ENCODE measurements at regions of chr10 and their contacts with region 1.

Region 1: GRCh38 chr10:26725837-26726727 is 28.6 kb downstream of the PDSS1 start:
- DNase-seq: peak; percentile 18 to 63
- ATAC-seq: peak; percentile 89; a peak in 5 of 6 replicates
- H3K4me3 ChIP-seq: no peak overlapping the region
- H3K27ac ChIP-seq: no peak overlapping the region
- H3K4me1 ChIP-seq: 0 out of 3 replicates have a peak, but pooled peaks cover 5% of the 10 kb centered on the region
- CTCF ChIP-seq: peak; percentile 93
- EP300 ChIP-seq: no peak
- POLR2A ChIP-seq: no peak
- RAD21 ChIP-seq: peak; percentile 86 to 88

Region 2: GRCh38 chr10:26528715-26529393 is 197.2 kb before region 1 on chr10:
- CTCF ChIA-PET with region 1: no interaction called
- POLR2A ChIA-PET with region 1: no interaction called
- DNase-seq: no peak
- ATAC-seq: no peak
- H3K4me3 ChIP-seq: no peak overlapping the region
- H3K27ac ChIP-seq: no peak overlapping the region
- H3K4me1 ChIP-seq: peaks cover 6% of the 10 kb centered on the region; the same call in 1 of the 3 replicates
- CTCF ChIP-seq: no peak
- EP300 ChIP-seq: no peak
- POLR2A ChIP-seq: no peak
- RAD21 ChIP-seq: no peak

Region 3: GRCh38 chr10:26675873-26676257 is 50.2 kb before region 1 on chr10:
- CTCF ChIA-PET with region 1: no interaction called
- POLR2A ChIA-PET with region 1: no interaction called
- DNase-seq: no peak
- ATAC-seq: no peak
- H3K4me3 ChIP-seq: no peak overlapping the region
- H3K27ac ChIP-seq: no peak overlapping the region
- H3K4me1 ChIP-seq: no peaks in the 10 kb centered on the region
- CTCF ChIP-seq: no peak
- EP300 ChIP-seq: no peak
- POLR2A ChIP-seq: no peak
- RAD21 ChIP-seq: no peak

Region 4: DNA sequence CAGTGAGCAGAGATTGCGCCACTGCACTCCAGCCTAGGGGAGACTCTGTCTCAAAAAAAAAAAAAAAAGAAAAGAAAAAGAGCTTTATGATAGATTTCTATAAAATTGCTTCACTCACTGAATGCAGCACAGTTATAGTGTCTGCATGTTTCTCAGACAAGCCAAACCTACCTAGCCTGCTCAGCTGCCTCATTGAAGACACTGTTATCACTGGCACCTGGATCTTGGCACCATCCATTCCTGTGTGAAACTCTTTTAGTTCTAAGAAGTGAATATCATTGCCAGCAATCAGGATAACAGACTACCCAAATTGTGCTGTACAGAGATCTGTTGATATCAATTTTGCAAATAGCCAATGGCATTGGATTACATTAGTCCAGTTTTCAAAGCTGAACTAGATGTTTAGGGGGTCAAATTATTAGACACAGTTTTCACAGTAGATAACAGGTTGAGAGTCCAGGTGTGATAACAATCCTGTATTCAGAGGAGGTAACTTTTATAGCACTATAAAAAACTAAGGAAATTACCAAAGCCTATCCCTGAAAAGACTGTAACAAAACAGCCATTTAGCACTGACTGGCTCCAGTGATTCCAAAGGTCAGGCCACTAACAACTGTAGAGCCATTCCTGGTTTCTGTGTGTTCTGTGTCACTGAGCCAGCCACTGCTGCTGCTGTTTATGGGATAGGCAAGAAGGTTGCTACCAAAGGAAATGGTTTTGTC is 11.5 kb before region 1 on chr10:
- CTCF ChIA-PET with region 1: interaction called, 34 read pairs
- POLR2A ChIA-PET with region 1: no interaction called
- DNase-seq: no peak
- ATAC-seq: no peak
- H3K4me3 ChIP-seq: no peak overlapping the region
- H3K27ac ChIP-seq: no peak overlapping the region
- H3K4me1 ChIP-seq: no peaks in the 10 kb centered on the region
- CTCF ChIP-seq: no peak
- EP300 ChIP-seq: no peak
- POLR2A ChIP-seq: no peak
- RAD21 ChIP-seq: no peak

Region 5: DNA sequence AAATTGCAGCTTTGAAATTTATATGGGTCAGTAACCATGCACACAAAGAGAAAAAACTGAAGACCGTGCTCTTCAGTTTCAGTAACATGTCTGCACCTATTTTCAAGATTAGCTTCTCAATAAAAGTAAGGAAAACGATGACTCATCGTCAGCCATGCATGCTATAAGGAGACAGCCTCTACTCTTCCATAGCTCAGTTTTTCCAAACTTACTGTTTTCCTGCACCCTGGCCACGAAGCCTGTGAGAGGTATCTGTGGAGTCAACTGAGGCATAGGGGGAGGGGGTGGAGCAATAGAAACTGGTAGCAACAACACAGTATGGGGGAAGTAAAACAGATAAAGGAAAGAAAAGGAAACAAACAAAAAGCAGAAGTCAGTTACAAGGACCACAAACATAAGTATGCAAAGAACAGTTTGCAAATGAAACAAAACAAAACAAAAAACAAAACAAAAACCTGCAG is 29.4 kb after region 1 on chr10:
- CTCF ChIA-PET with region 1: interaction called, 12 read pairs
- POLR2A ChIA-PET with region 1: no interaction called
- DNase-seq: peak in 1 of 2 experiments; percentile 35
- ATAC-seq: no peak; a peak in 1 of 6 replicates
- H3K4me3 ChIP-seq: no peak overlapping the region
- H3K27ac ChIP-seq: peak overlapping the region in 1 of 2 experiments; percentile 64; a peak in 2 of 6 replicates
- H3K4me1 ChIP-seq: peaks cover 8% of the 10 kb centered on the region
- CTCF ChIP-seq: no peak
- EP300 ChIP-seq: no peak
- POLR2A ChIP-seq: no peak
- RAD21 ChIP-seq: no peak

Region 6: DNA sequence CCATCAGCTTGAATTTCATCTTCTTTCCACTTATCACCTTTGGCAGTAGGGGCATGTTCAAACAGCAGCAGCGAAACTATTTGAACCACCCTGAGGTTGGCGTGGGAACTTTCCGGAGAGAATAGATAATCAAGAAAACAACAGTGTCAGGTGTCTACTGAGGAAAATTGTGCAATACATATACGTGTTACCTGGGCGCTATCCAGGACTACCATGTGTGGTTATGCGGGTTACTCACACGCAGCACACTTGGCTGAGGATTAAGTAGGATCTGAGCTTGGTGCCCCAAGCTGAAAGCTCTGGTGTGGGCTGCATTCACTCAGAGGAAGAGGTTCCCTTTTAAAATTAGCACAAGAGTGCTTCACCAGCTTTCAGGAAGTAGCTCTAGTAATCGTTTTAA is 143.4 kb after region 1 on chr10:
- CTCF ChIA-PET with region 1: interaction called, 11 read pairs
- POLR2A ChIA-PET with region 1: no interaction called
- DNase-seq: no peak
- ATAC-seq: no peak
- H3K4me3 ChIP-seq: no peak overlapping the region
- H3K27ac ChIP-seq: no peak overlapping the region
- H3K4me1 ChIP-seq: no peaks in the 10 kb centered on the region
- CTCF ChIP-seq: no peak
- EP300 ChIP-seq: no peak
- POLR2A ChIP-seq: no peak
- RAD21 ChIP-seq: no peak

Region 7: DNA sequence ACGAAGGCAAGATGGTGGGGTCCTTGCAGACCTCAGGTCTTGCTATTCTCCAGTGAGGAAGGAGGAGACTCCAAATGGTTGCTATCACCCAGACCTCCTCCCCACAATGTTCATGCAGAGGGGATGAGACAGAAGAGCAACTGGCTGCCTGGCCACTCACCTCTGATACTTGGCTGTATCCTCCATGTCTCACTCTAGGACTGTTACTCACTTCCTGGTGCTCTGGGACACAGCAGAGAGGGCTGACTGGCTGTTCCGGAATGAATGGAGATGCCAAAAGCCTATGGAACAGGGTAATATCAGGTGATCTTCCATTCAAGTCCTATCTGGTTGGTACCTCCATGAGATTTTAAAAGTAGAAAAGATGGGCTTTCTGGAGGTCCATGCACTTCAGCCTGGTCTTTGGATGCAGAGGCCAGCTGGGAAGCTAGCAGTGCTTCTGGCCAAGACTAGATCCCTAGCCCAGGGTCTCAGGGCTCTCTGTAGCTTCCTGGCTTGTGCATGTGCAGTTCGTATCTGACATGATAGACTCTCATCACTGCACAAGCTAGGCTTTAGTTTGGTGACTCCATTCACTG is 161.6 kb after region 1 on chr10:
- CTCF ChIA-PET with region 1: interaction called, 160 read pairs
- POLR2A ChIA-PET with region 1: no interaction called
- DNase-seq: no peak
- ATAC-seq: no peak
- H3K4me3 ChIP-seq: no peak overlapping the region
- H3K27ac ChIP-seq: no peak overlapping the region
- H3K4me1 ChIP-seq: no peaks in the 10 kb centered on the region
- CTCF ChIP-seq: no peak
- EP300 ChIP-seq: no peak
- POLR2A ChIP-seq: no peak
- RAD21 ChIP-seq: no peak

Measured in A549 (cell line).